Ascending aorta (tissue), 2 donors: ENCODE measurements at regions of chr2 and their contacts with region 1.

Region 1: DNA sequence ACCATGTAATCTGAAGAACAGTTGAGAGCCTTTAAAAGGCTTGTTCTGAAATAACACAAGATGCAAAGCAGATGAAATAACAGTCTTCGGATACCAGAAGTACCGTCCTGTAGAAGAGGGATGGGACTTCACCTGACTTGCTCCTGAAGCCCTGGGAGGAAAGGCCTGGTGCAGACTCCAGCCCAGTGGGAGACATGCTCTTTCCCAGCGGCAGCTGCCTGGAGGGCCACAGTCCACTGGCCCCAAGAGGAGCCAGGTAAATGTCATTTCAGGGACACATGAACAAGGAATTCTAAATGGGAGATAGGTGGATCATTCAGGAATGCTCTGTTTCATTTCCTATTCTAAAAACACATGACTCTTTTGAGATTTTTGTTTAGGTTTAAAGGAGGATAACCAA is 22.6 kb upstream of the CHN1 start:
- DNase-seq: no peak
- H3K4me3 ChIP-seq: no peak overlapping the region
- H3K27ac ChIP-seq: peak overlapping the region; percentile 58 to 88
- H3K4me1 ChIP-seq: peaks cover 0 to 3% of the 10 kb centered on the region in 2 donors
- H3K27me3 ChIP-seq: no peaks in the 10 kb centered on the region
- CTCF ChIP-seq: no peak

Region 2: GRCh38 chr2:175004980-175005732 is 22.6 kb before region 1 on chr2 and contains the start of gene CHN1:
- intact Hi-C with region 1: loop called (anchors 1 kb)
- DNase-seq: peak in 1 of 2 donors; percentile 88
- H3K4me3 ChIP-seq: peak within 1 kb of the TSS; percentile 86 to 96
- H3K27ac ChIP-seq: peak within 1 kb of the TSS; percentile 88 to 96
- H3K4me1 ChIP-seq: peaks cover 0 to 6% of the 10 kb centered on the region in 2 donors
- H3K27me3 ChIP-seq: no peaks in the 10 kb centered on the region
- CTCF ChIP-seq: peak in 1 of 3 experiments; percentile 16
- total RNA-seq, gene CHN1: 7.8 TPM